Activated T-helper 1 cell treated with anti-CD3 and anti-CD28 coated beads, Interleukin-12 subunit alpha, Interleukin-12 subunit beta, Interleukin-2, Interleukin-4 antibody, amounts not matched to agents 30 ng/mL and 10 ng/mL and 1 ng/mL, durations not matched to agents 14 hours and 24 hours and 36 hours (primary cell): ENCODE measurements at regions of chr1 and their contacts with region 1.

Region 1: GRCh38 chr1:151070474-151071276 is at the start of gene GABPB2:
- DNase-seq: peak; percentile 81
- H3K4me3 Mint-ChIP-seq: peak within 1 kb of the TSS; percentile 98
- H3K27ac Mint-ChIP-seq: peak within 1 kb of the TSS; percentile 100
- H3K4me1 Mint-ChIP-seq: peaks cover 17% of the 10 kb centered on the region
- H3K27me3 Mint-ChIP-seq: no peaks in the 10 kb centered on the region
- total RNA-seq, gene GABPB2: 19.4 and 21.5 TPM in 2 replicates

Region 2: GRCh38 chr1:150813058-150813707 is 257.5 kb before region 1 on chr1:
- intact Hi-C with region 1: no loop called
- DNase-seq: no peak
- H3K4me3 Mint-ChIP-seq: no peak overlapping the region
- H3K27ac Mint-ChIP-seq: no peak overlapping the region
- H3K4me1 Mint-ChIP-seq: peaks cover 1% of the 10 kb centered on the region
- H3K27me3 Mint-ChIP-seq: no peaks in the 10 kb centered on the region

Region 3: DNA sequence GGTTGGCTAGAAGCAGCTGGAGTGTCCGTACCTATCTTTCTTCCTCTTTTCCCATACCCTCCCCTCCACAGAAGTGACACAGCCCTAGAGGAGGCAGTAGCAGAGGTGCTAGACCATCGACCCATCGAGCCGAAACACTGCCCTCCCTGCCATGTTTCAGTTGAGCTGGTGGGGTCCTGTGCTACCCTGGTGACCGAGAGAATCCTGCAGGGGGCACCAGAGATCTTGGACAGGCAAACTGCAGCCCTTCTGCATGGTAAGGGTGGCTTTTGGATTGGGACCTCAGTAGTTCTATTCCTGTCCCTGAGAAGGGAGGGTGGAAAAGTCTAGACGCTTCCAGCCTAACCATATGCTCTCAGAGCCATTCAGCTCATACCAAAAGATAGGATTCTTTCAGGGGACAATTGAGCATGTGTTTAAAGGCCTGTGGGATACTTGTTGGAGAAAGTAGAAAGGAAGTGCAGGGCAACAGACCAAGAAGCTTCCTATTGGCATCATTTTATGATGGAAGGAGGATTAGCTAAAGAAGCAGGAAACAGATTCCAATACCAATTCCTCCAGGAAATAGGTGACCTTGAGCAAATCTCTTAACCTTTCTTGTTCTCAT is 46.0 kb before region 1 on chr1:
- intact Hi-C with region 1: loop called (anchors 1 kb)
- DNase-seq: peak; percentile 71
- H3K4me3 Mint-ChIP-seq: peak overlapping the region; percentile 26
- H3K27ac Mint-ChIP-seq: no peak overlapping the region
- H3K4me1 Mint-ChIP-seq: peaks cover 6% of the 10 kb centered on the region
- H3K27me3 Mint-ChIP-seq: no peaks in the 10 kb centered on the region

Region 4: GRCh38 chr1:151146412-151147140 is 75.9 kb after region 1 on chr1 and contains the start of gene SEMA6C:
- intact Hi-C with region 1: loop called (anchors 2 kb)
- DNase-seq: peak; percentile 91
- H3K4me3 Mint-ChIP-seq: peak within 1 kb of the TSS; percentile 97
- H3K27ac Mint-ChIP-seq: peak within 1 kb of the TSS; percentile 57
- H3K4me1 Mint-ChIP-seq: peaks cover 22% of the 10 kb centered on the region
- H3K27me3 Mint-ChIP-seq: peaks cover 20% of the 10 kb centered on the region
- total RNA-seq, gene SEMA6C: 3.6 and 4.3 TPM in 2 replicates

Region 5: DNA sequence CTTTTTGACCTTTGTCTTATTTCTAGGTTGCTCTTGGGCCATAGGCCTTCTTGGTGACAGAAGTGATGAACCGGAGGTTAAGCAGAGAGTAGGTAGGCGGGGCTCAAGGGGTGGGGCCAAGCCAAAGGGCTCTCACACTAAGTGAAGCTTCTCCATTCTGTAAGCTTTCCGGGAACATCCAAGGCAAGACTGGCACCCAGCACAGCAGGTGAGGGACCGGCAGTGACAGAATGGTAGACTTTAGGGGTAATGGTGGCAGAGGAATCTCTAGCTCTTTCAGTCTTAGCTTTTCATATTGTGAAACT is 85.8 kb after region 1 on chr1 and contains the start of gene TNFAIP8L2:
- intact Hi-C with region 1: loop called (anchors 1 kb)
- DNase-seq: peak; percentile 72
- H3K4me3 Mint-ChIP-seq: peak within 1 kb of the TSS; percentile 92
- H3K27ac Mint-ChIP-seq: peak within 1 kb of the TSS; percentile 99
- H3K4me1 Mint-ChIP-seq: peaks cover 42% of the 10 kb centered on the region
- H3K27me3 Mint-ChIP-seq: no peaks in the 10 kb centered on the region
- total RNA-seq, gene TNFAIP8L2: 38.0 and 38.5 TPM in 2 replicates

Region 6: DNA sequence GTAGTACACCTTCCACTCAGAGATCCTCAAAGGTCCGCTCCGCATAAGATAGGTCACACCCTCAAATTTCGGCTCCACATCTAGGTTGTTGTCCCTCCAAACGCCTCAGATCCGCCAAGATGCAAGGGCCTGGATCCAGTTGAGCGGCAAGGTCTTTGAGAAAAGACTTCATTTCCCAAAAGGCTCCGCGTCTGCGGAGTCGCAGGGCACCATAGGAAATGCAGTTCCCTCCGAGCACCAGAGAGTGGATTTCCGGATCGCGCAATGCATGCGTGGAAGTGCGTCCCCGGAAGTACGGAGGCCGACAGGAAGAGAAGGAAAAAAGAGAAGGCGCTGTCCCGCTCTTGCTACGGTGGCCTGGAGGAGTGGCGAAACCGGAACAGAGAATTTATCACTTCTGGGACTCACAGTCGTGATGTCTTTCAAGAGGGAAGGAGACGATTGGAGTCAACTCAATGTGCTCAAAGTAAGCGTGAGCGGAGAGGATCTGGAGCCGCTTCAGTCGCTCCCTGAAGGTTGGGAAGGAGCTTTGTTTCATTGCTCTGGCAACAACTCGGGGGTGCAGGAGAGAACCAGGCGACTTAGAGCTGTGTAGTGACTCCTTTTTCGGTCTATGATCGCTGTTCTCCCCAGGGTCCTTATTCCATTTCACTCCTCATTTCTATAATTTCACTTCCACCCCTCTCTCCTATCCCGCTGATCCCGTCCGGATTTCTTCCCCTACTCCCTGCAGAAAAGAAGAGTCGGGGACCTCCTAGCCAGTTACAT is 95.2 kb after region 1 on chr1 and contains the starts of genes LYSMD1 and SCNM1:
- intact Hi-C with region 1: loop called (anchors 2 kb)
- DNase-seq: peak; percentile 96
- H3K4me3 Mint-ChIP-seq: peak within 1 kb of the TSS; percentile 95
- H3K27ac Mint-ChIP-seq: peak within 1 kb of the TSS; percentile 97
- H3K4me1 Mint-ChIP-seq: peaks cover 53% of the 10 kb centered on the region
- H3K27me3 Mint-ChIP-seq: peaks cover 2% of the 10 kb centered on the region
- total RNA-seq, gene LYSMD1: 4.0 and 5.0 TPM in 2 replicates
- total RNA-seq, gene SCNM1: 111 and 117 TPM in 2 replicates